ENCODE measurements at regions of chr5 and their contacts with region 1.

Region 1: DNA sequence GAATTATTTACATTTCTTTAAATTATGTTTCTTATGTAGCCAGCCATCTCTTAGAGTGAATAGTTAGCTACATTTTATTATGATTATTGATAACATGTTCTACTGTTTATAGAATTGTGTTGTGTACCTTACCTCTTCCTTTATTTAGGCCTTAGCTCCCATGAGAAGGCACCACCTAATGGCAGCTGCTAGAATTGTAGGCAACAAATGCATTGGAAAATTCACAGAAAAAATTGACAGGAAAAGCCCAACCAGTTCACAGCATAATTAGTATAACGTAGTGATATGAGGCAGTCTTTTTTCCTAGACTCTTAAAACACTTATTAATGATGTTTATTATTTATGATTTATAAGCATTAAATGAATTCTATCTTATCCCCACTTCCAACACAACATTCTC is 175.8 kb downstream of the WDR70 start:
- DNase-seq: no peak
- ATAC-seq: peak; percentile 58
- H3K4me3 Mint-ChIP-seq: no peak overlapping the region
- H3K27ac Mint-ChIP-seq: no peak overlapping the region
- H3K4me1 Mint-ChIP-seq: peaks cover 12% of the 10 kb centered on the region
- H3K27me3 Mint-ChIP-seq: no peaks in the 10 kb centered on the region
- CTCF ChIP-seq: 0 out of 2 replicates have a peak, but pooled peaks have one; percentile 33

Region 2: GRCh38 chr5:37539461-37539860 is 15.5 kb before region 1 on chr5:
- CTCF ChIA-PET with region 1: interaction called, 11 read pairs
- POLR2A ChIA-PET with region 1: no interaction called
- DNase-seq: no peak
- ATAC-seq: no peak
- H3K4me3 Mint-ChIP-seq: no peak overlapping the region
- H3K27ac Mint-ChIP-seq: peak overlapping the region; percentile 25; the same call in 1 of the 2 replicates
- H3K4me1 Mint-ChIP-seq: peaks cover 6% of the 10 kb centered on the region
- H3K27me3 Mint-ChIP-seq: no peaks in the 10 kb centered on the region
- CTCF ChIP-seq: no peak